ENCODE measurements at regions of chr17 and their contacts with region 1.

Region 1: GRCh38 chr17:27601069-27601975 is 29.7 kb upstream of the LGALS9 start:
- DNase-seq: peak; percentile 68 to 95
- H3K4me3 ChIP-seq: no peak overlapping the region
- H3K27ac ChIP-seq: no peak overlapping the region
- H3K4me1 ChIP-seq: no peaks in the 10 kb centered on the region; a peak in 1 of 7 replicates
- H3K27me3 ChIP-seq: no peaks in the 10 kb centered on the region
- CTCF ChIP-seq: peak; percentile 54 to 87 (median 87)
- EP300 ChIP-seq: peak in 1 of 2 experiments; percentile 33; a peak in 1 of 3 replicates
- POLR2A ChIP-seq: no peak
- RAD21 ChIP-seq: peak; percentile 90 to 93

Region 2: DNA sequence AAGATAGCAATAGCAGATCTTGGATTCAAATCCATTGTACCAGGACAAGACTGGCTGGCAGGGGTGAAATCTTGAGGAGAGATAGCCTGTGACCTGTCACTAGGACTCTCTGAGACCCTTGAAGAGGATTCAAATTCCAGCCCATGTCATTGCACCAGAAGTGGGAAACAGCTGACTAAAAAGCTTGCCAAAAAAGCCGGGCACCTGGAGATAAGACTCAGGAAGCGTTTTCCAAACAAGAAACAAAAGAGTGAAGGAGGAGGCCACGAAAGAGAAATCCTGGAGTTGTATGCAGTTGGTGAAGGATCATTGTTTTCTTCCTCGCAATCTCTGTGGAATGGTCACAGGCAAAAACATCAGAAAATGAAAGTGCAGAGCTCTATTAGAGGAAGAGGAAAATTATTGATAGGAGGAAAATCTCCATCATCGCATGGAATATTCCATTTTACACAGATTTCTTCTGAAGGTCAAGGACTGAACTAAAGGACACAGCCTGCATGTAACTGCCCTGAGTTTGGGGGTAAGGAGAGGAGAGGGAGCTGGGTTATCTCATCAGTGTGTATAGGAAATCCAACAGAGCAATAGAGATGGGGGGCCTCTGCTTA is 316.4 kb before region 1 on chr17:
- CTCF ChIA-PET with region 1: no interaction called
- POLR2A ChIA-PET with region 1: no interaction called
- DNase-seq: no peak
- H3K4me3 ChIP-seq: no peak overlapping the region
- H3K27ac ChIP-seq: no peak overlapping the region
- H3K4me1 ChIP-seq: no peaks in the 10 kb centered on the region
- H3K27me3 ChIP-seq: no peaks in the 10 kb centered on the region; a peak in 1 of 7 replicates
- CTCF ChIP-seq: no peak
- EP300 ChIP-seq: no peak
- POLR2A ChIP-seq: no peak
- RAD21 ChIP-seq: no peak

Region 3: GRCh38 chr17:27381007-27381501 is 220.3 kb before region 1 on chr17:
- CTCF ChIA-PET with region 1: interaction called, 134 read pairs
- POLR2A ChIA-PET with region 1: no interaction called
- DNase-seq: peak; percentile 68 to 97
- H3K4me3 ChIP-seq: no peak overlapping the region
- H3K27ac ChIP-seq: no peak overlapping the region
- H3K4me1 ChIP-seq: no peaks in the 10 kb centered on the region
- H3K27me3 ChIP-seq: no peaks in the 10 kb centered on the region
- CTCF ChIP-seq: peak; percentile 100
- EP300 ChIP-seq: peak in 1 of 2 experiments; percentile 46; a peak in 1 of 3 replicates
- POLR2A ChIP-seq: no peak
- RAD21 ChIP-seq: peak; percentile 78 to 82

Region 4: DNA sequence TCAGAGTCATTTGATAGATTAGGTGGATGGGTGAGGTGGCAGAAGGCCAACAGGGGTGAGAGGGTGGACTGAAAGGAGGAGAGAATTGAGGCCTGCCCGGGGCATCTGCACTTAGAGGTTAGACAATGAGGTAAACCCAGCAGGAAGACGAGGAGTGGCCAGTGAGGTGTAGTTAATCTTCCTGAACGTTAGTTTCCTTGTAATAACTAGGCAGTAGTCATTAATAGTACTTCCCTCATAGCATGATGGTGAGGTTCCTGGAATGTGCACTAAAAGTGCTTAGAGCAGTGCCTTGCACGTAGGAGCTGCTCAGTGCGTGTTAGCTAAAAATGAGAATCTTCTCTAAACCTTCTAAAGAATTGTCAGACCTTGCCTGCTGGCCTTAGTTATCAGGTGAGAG is 158.6 kb before region 1 on chr17:
- CTCF ChIA-PET with region 1: interaction called, 13 read pairs
- POLR2A ChIA-PET with region 1: no interaction called
- DNase-seq: no peak
- H3K4me3 ChIP-seq: no peak overlapping the region
- H3K27ac ChIP-seq: no peak overlapping the region
- H3K4me1 ChIP-seq: no peaks in the 10 kb centered on the region
- H3K27me3 ChIP-seq: no peaks in the 10 kb centered on the region
- CTCF ChIP-seq: no peak
- EP300 ChIP-seq: no peak
- POLR2A ChIP-seq: no peak
- RAD21 ChIP-seq: no peak

Region 5: DNA sequence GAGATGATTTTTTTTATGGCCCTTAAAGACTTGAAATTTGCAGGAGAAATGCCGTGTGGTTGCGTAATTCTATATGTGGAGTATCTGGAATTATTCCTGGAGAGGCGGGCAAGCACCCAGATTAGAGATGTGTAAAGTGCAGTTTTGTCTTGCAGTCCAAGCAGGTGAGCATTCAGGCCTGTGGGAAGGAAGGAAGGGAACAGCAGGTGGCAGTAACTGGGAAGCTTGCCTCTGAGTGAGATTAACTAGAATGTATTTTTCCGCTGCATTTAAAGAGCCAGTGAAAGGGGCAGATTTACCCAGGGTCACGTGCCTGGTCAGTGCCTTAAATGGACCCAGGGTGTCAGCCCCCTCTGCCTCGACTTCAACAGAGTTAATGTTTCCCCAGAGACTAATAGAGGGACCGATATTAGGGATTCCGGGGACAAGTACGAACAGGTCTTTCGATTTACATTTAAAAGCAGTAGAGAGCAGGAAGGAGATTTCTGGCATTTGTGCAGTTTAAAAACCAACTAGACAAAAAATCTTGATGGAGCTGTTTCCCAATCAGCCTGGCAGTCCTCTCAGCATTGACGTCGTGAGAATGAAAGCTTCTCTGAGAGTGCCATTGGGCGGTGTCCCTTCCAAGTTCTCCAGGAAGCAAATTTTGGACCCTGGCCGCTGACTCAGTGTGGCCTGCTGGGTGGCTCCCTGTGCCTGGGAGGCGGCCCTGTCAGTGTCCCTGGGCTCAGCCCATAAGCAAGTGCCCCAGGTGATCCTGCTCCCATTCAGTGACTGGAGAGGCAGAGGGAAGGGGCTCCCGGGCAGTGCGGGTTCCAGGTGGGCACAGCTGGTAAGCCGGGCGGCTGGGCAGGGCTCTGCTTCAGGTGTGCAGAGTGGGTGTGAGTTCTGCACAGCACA is 106.9 kb before region 1 on chr17:
- CTCF ChIA-PET with region 1: interaction called, 15 read pairs
- POLR2A ChIA-PET with region 1: no interaction called
- DNase-seq: no peak
- H3K4me3 ChIP-seq: no peak overlapping the region; a peak in 1 of 8 replicates
- H3K27ac ChIP-seq: no peak overlapping the region
- H3K4me1 ChIP-seq: peaks cover 29 to 53% (median 41%) of the 10 kb centered on the region in 4 experiments
- H3K27me3 ChIP-seq: no peaks in the 10 kb centered on the region
- CTCF ChIP-seq: peak; percentile 28 to 44 (median 33)
- EP300 ChIP-seq: no peak
- POLR2A ChIP-seq: no peak
- RAD21 ChIP-seq: peak in 1 of 2 experiments; percentile 50; a peak in 2 of 4 replicates

Region 6: GRCh38 chr17:27559506-27560481 is 41.5 kb before region 1 on chr17:
- CTCF ChIA-PET with region 1: interaction called, 19 read pairs
- POLR2A ChIA-PET with region 1: interaction called, 4 read pairs
- DNase-seq: no peak
- H3K4me3 ChIP-seq: no peak overlapping the region
- H3K27ac ChIP-seq: no peak overlapping the region; the same call in 1 of the 2 replicates
- H3K4me1 ChIP-seq: peaks cover 0 to 11% (median 2%) of the 10 kb centered on the region in 4 experiments; a peak in 4 of 7 replicates
- H3K27me3 ChIP-seq: no peaks in the 10 kb centered on the region
- CTCF ChIP-seq: no peak
- EP300 ChIP-seq: no peak
- POLR2A ChIP-seq: no peak
- RAD21 ChIP-seq: 0 out of 4 replicates have a peak, but pooled peaks of 1 of the 2 experiments have one; percentile 8

Region 7: GRCh38 chr17:27586203-27586721 is 15.1 kb before region 1 on chr17:
- CTCF ChIA-PET with region 1: interaction called, 150 read pairs
- POLR2A ChIA-PET with region 1: no interaction called
- DNase-seq: no peak
- H3K4me3 ChIP-seq: no peak overlapping the region
- H3K27ac ChIP-seq: no peak overlapping the region
- H3K4me1 ChIP-seq: 0 out of 7 replicates have a peak, but pooled peaks cover 0 to 2% (median 0%) of the 10 kb centered on the region in 4 experiments
- H3K27me3 ChIP-seq: no peaks in the 10 kb centered on the region
- CTCF ChIP-seq: no peak
- EP300 ChIP-seq: no peak
- POLR2A ChIP-seq: no peak
- RAD21 ChIP-seq: no peak

Region 8: DNA sequence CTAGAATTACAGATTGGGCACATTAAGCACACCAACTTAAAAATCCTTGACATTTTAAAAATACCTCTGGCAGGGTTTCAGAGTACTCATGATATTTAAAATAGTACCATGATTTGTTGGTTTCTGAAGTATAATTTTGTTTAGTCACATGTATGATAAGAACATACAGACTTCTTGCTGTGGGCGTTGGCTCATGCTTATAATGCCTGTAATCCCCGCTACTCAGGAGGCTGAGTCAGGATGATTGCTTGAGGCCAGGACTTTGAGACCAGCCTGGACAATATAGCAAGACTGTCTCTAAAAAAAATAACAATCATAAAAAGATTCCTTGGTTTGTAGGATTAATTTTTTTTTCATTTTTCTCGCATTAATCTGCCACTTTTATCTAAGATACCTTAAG is 120.5 kb after region 1 on chr17:
- CTCF ChIA-PET with region 1: no interaction called
- POLR2A ChIA-PET with region 1: no interaction called
- DNase-seq: no peak
- H3K4me3 ChIP-seq: no peak overlapping the region
- H3K27ac ChIP-seq: no peak overlapping the region
- H3K4me1 ChIP-seq: no peaks in the 10 kb centered on the region
- H3K27me3 ChIP-seq: no peaks in the 10 kb centered on the region
- CTCF ChIP-seq: no peak
- EP300 ChIP-seq: no peak
- POLR2A ChIP-seq: no peak
- RAD21 ChIP-seq: no peak

Region 9: DNA sequence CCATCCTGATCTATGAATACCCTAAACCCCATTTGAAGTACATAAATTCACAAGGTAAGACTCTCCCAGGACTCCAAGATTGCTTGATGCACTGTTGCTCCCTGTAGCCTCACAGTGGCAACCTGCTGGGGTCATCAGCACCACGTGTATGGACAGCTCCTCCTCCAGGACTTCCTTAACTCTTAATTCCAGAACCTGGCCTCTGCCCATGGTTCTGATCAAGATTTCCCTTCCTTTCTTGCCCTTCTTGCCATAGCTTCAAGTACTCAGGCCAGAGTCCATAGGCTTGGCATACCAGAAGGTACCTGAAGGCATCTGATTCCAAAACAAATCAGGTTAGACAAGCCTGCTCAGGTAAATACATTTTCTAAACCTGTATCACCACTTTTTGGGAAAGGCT is 407.2 kb after region 1 on chr17:
- CTCF ChIA-PET with region 1: no interaction called
- POLR2A ChIA-PET with region 1: no interaction called
- DNase-seq: peak; percentile 25 to 84
- H3K4me3 ChIP-seq: no peak overlapping the region
- H3K27ac ChIP-seq: no peak overlapping the region
- H3K4me1 ChIP-seq: no peaks in the 10 kb centered on the region
- H3K27me3 ChIP-seq: peaks cover 0 to 1% (median 0%) of the 10 kb centered on the region in 4 experiments; a peak in 1 of 7 replicates
- CTCF ChIP-seq: no peak
- EP300 ChIP-seq: no peak
- POLR2A ChIP-seq: no peak
- RAD21 ChIP-seq: peak in 1 of 2 experiments; percentile 32; a peak in 2 of 4 replicates